B cell (primary cell): ENCODE measurements at regions of chr19 and their contacts with region 1.

Region 1: GRCh38 chr19:11505032-11505503 is 571 bp downstream of the ZNF653 start:
- DNase-seq: peak; percentile 97
- ATAC-seq: peak; percentile 90
- H3K4me3 ChIP-seq: peak overlapping the region in 4 of 5 experiments; percentile 62 to 98 (median 82)
- H3K4me3 Mint-ChIP-seq: peak overlapping the region; percentile 87
- H3K27ac ChIP-seq: peak overlapping the region; percentile 65 to 98
- H3K27ac Mint-ChIP-seq: peak overlapping the region; percentile 93
- H3K4me1 ChIP-seq: peaks cover 9 to 13% of the 10 kb centered on the region in 2 donors
- H3K4me1 Mint-ChIP-seq: peaks cover 13% of the 10 kb centered on the region
- H3K27me3 ChIP-seq: no peaks in the 10 kb centered on the region
- H3K27me3 Mint-ChIP-seq: no peaks in the 10 kb centered on the region
- CTCF ChIP-seq: no peak

Region 2: GRCh38 chr19:11050323-11051114 is 454.5 kb before region 1 on chr19:
- CTCF ChIA-PET with region 1: no interaction called
- POLR2A ChIA-PET with region 1: interaction called, 10 read pairs
- intact Hi-C with region 1: no loop called
- DNase-seq: no peak
- ATAC-seq: no peak
- H3K4me3 ChIP-seq: no peak overlapping the region
- H3K4me3 Mint-ChIP-seq: peak overlapping the region; percentile 69
- H3K27ac ChIP-seq: no peak overlapping the region
- H3K27ac Mint-ChIP-seq: no peak overlapping the region
- H3K4me1 ChIP-seq: peaks cover 78 to 92% of the 10 kb centered on the region in 2 donors
- H3K4me1 Mint-ChIP-seq: peaks cover 72% of the 10 kb centered on the region
- H3K27me3 ChIP-seq: peaks cover 0 to 29% (median 4%) of the 10 kb centered on the region in 4 experiments
- H3K27me3 Mint-ChIP-seq: peaks cover 17% of the 10 kb centered on the region
- CTCF ChIP-seq: no peak

Region 3: DNA sequence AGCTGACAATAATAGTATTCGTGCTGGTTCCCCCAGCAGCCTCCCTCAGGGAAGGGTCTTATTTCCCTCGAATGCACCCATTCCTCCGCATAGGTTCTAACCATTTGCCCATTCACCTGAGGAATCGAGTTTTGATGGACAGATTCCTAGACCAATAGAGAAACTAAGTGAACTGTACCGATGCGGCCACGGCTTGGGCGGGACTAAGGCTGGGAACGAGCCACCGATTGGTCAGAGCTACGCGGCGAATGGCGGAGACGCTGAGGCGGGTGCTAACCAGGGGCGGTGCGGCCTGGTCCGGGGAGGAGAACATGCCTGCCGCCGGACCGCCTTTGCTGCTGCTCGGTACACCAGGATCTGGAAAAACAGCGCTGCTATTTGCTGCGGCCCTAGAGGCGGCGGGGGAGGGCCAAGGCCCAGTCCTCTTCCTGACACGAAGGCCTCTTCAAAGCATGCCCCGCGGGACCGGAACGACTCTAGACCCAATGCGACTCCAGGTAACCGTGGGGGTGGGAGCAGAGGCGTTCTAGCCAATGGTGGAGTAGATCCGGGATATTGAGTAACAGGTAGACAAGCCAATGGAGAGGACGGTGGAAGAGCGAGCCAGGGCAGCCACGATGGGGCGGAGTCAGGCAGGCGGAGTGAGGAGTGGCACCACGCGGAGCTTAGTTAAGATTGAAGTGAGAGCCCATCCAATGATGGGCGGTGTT is 130.5 kb before region 1 on chr19 and contains the start of gene SWSAP1:
- CTCF ChIA-PET with region 1: no interaction called
- POLR2A ChIA-PET with region 1: no interaction called
- intact Hi-C with region 1: loop called (anchors 1 kb)
- DNase-seq: peak; percentile 99
- ATAC-seq: peak; percentile 89
- H3K4me3 ChIP-seq: peak within 1 kb of the TSS; percentile 64 to 83 (median 75)
- H3K4me3 Mint-ChIP-seq: no peak within 1 kb of the TSS
- H3K27ac ChIP-seq: peak within 1 kb of the TSS; percentile 88 to 93
- H3K27ac Mint-ChIP-seq: peak within 1 kb of the TSS; percentile 69
- H3K4me1 ChIP-seq: peaks cover 27 to 32% of the 10 kb centered on the region in 2 donors
- H3K4me1 Mint-ChIP-seq: peaks cover 14% of the 10 kb centered on the region
- H3K27me3 ChIP-seq: no peaks in the 10 kb centered on the region
- H3K27me3 Mint-ChIP-seq: no peaks in the 10 kb centered on the region
- CTCF ChIP-seq: no peak
- total RNA-seq, gene SWSAP1: 5.0 TPM in 2 replicates

Region 4: DNA sequence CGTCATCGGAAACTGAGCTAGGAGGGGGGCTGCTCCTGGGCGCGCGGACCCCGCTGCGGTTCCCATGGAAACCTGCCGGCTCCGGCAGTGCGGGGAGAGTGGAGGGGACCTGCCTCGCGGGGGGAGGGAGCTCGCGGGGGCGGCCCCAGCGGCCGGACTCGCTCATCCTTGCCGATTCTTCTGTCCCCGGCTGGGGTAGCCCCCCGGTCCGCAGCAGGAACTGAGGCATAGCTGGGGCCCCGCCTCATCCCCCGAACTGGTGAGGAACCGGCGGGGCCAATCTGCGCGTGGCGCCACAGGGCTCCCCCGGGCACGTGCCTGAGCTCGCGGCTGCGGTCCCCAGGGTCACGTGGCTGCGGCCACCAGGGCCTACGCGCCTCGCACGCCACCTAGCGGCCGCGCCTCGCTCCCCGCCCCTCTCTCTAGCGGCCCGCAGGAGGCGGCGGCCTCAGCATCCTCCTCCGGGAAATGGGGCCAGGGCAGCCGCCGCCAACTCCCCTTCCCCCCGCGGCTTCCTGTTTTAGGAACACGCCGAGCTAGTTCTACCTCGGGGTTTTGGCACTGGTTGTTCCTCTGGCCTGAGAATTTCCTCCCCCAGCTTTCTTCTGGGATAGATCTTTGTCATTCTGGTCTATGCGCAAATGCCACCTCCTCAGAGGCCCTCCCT is 22.6 kb before region 1 on chr19:
- CTCF ChIA-PET with region 1: no interaction called
- POLR2A ChIA-PET with region 1: interaction called, 3 read pairs
- intact Hi-C with region 1: loop called (anchors 1 kb)
- DNase-seq: peak; percentile 93
- ATAC-seq: peak; percentile 79
- H3K4me3 ChIP-seq: peak overlapping the region in 4 of 5 experiments; percentile 20 to 48 (median 30)
- H3K4me3 Mint-ChIP-seq: peak overlapping the region; percentile 80
- H3K27ac ChIP-seq: no peak overlapping the region
- H3K27ac Mint-ChIP-seq: peak overlapping the region; percentile 80
- H3K4me1 ChIP-seq: peaks cover 37 to 42% of the 10 kb centered on the region in 2 donors
- H3K4me1 Mint-ChIP-seq: peaks cover 27% of the 10 kb centered on the region
- H3K27me3 ChIP-seq: peaks cover 0 to 46% (median 25%) of the 10 kb centered on the region in 4 experiments
- H3K27me3 Mint-ChIP-seq: peaks cover 34% of the 10 kb centered on the region
- CTCF ChIP-seq: peak; percentile 93

Region 5: DNA sequence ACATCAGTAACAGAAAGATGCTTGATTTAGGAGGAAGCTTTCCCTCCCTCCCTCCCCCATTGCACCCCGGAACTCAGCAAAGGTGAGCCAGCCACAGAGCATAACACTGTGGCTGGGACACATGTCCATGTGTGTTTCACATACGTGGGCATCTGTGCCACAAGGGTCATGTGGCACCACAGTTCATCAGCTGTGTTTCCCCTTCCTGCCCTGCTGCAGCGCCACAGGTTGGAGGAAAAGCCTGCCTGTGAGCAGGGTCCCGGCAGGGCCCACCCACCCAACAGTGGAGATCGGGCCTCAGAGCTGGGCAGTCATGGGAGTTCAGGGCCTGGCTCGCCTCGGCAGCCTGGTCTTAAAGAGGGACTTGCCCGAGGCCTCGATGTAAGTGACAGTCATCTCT is 69.6 kb after region 1 on chr19:
- CTCF ChIA-PET with region 1: no interaction called
- POLR2A ChIA-PET with region 1: no interaction called
- intact Hi-C with region 1: no loop called
- DNase-seq: peak; percentile 78
- ATAC-seq: peak; percentile 44
- H3K4me3 ChIP-seq: no peak overlapping the region
- H3K4me3 Mint-ChIP-seq: peak overlapping the region; percentile 77
- H3K27ac ChIP-seq: peak overlapping the region; percentile 45 to 80
- H3K27ac Mint-ChIP-seq: peak overlapping the region; percentile 93
- H3K4me1 ChIP-seq: peaks cover 44 to 73% of the 10 kb centered on the region in 2 donors
- H3K4me1 Mint-ChIP-seq: peaks cover 59% of the 10 kb centered on the region
- H3K27me3 ChIP-seq: no peaks in the 10 kb centered on the region
- H3K27me3 Mint-ChIP-seq: no peaks in the 10 kb centered on the region
- CTCF ChIP-seq: no peak

Region 6: GRCh38 chr19:12696366-12697335 is 1191.6 kb after region 1 on chr19 and contains the start of gene FBXW9:
- CTCF ChIA-PET with region 1: no interaction called
- POLR2A ChIA-PET with region 1: no interaction called
- intact Hi-C with region 1: loop called (anchors 2 kb)
- DNase-seq: peak; percentile 98
- ATAC-seq: peak; percentile 87
- H3K4me3 ChIP-seq: peak within 1 kb of the TSS; percentile 64 to 88 (median 82)
- H3K4me3 Mint-ChIP-seq: peak within 1 kb of the TSS; percentile 94
- H3K27ac ChIP-seq: peak within 1 kb of the TSS; percentile 85 to 93
- H3K27ac Mint-ChIP-seq: peak within 1 kb of the TSS; percentile 98
- H3K4me1 ChIP-seq: peaks cover 13 to 17% of the 10 kb centered on the region in 2 donors
- H3K4me1 Mint-ChIP-seq: peaks cover 10% of the 10 kb centered on the region
- H3K27me3 ChIP-seq: no peaks in the 10 kb centered on the region
- H3K27me3 Mint-ChIP-seq: no peaks in the 10 kb centered on the region
- CTCF ChIP-seq: no peak
- total RNA-seq, gene FBXW9: 4.7 and 5.2 TPM in 2 replicates